Panc1 (cell line): ENCODE measurements at regions of chr16 and their contacts with region 1.

Region 1: GRCh38 chr16:51321251-51321650 is 170.2 kb upstream of the SALL1 start:
- DNase-seq: no peak
- ATAC-seq: no peak
- H3K4me3 ChIP-seq: no peak overlapping the region
- H3K27ac ChIP-seq: no peak overlapping the region
- H3K4me1 ChIP-seq: no peaks in the 10 kb centered on the region
- H3K27me3 ChIP-seq: no peaks in the 10 kb centered on the region
- CTCF ChIP-seq: no peak

Region 2: GRCh38 chr16:50989047-50989446 is 332.2 kb before region 1 on chr16:
- CTCF ChIA-PET with region 1: no interaction called
- POLR2A ChIA-PET with region 1: no interaction called
- in situ Hi-C with region 1: no loop called
- intact Hi-C with region 1: no loop called
- DNase-seq: no peak
- ATAC-seq: no peak
- H3K4me3 ChIP-seq: no peak overlapping the region
- H3K27ac ChIP-seq: no peak overlapping the region
- H3K4me1 ChIP-seq: no peaks in the 10 kb centered on the region
- H3K27me3 ChIP-seq: no peaks in the 10 kb centered on the region
- CTCF ChIP-seq: no peak

Region 3: GRCh38 chr16:51255349-51255972 is 65.8 kb before region 1 on chr16:
- CTCF ChIA-PET with region 1: no interaction called
- POLR2A ChIA-PET with region 1: no interaction called
- in situ Hi-C with region 1: no loop called
- intact Hi-C with region 1: no loop called
- DNase-seq: no peak
- ATAC-seq: no peak
- H3K4me3 ChIP-seq: no peak overlapping the region
- H3K27ac ChIP-seq: no peak overlapping the region
- H3K4me1 ChIP-seq: no peaks in the 10 kb centered on the region
- H3K27me3 ChIP-seq: no peaks in the 10 kb centered on the region
- CTCF ChIP-seq: no peak

Region 4: GRCh38 chr16:51773521-51773920 is 452.3 kb after region 1 on chr16:
- CTCF ChIA-PET with region 1: no interaction called
- POLR2A ChIA-PET with region 1: interaction called, 13 read pairs
- in situ Hi-C with region 1: no loop called
- intact Hi-C with region 1: no loop called
- DNase-seq: no peak
- ATAC-seq: no peak
- H3K4me3 ChIP-seq: no peak overlapping the region
- H3K27ac ChIP-seq: no peak overlapping the region
- H3K4me1 ChIP-seq: no peaks in the 10 kb centered on the region
- H3K27me3 ChIP-seq: no peaks in the 10 kb centered on the region
- CTCF ChIP-seq: no peak